GM18951 (cell line): ENCODE measurements at regions of chr20 and their contacts with region 1.

Region 1: GRCh38 chr20:51306503-51307358 is 235.8 kb downstream of the NFATC2 start:
- POLR2A ChIP-seq: no peak

Region 2: DNA sequence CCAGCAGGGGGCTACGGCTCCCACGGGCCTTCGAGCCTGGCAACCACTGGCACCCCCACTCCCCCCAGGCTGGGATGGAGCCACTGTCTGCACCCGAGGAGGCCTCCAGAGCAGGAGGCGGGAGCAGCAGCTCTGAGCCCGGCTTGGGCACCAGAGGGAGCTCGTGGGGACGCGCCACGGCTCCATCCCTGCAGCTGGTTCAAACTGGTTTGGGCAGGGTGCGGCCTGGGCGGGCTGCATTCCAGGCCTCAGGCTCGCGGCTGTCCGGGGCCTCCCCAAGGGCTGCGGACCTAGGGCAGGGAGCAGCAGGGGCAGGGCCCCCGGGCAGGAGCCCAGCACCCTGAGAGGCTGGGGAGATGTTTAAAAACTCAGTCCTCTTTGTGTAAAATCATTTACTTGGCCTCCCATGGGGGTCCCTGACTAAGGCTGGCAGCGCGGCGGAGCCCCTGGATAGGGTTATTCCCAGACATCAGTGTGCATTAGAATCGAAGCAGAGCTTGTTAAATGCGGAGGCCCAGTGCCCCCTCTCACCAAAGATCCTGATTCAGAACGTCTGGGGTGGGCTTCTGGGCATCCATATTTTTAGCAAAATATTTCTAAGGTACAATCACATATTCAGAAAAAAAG is 516.0 kb before region 1 on chr20:
- in situ Hi-C with region 1: loop called (anchors 25 kb)
- POLR2A ChIP-seq: peak; percentile 79